CD14-positive monocyte (primary cell): ENCODE measurements at regions of chr10 and their contacts with region 1.

Region 1: GRCh38 chr10:132434405-132435005 is 37.5 kb downstream of the PWWP2B start:
- DNase-seq: peak; percentile 65 to 78 (median 69)
- H3K4me3 ChIP-seq: peak overlapping the region in 1 of 3 experiments; percentile 34
- H3K4me3 Mint-ChIP-seq: peak overlapping the region; percentile 31 to 39
- H3K27ac ChIP-seq: peak overlapping the region in 1 of 2 donors; percentile 76
- H3K27ac Mint-ChIP-seq: peak overlapping the region in 6 of 7 donors; percentile 22 to 79 (median 58)
- H3K4me1 ChIP-seq: peaks cover 12 to 13% of the 10 kb centered on the region in 2 donors
- H3K4me1 Mint-ChIP-seq: peaks cover 15% of the 10 kb centered on the region
- H3K27me3 ChIP-seq: no peaks in the 10 kb centered on the region
- H3K27me3 Mint-ChIP-seq: peaks cover 0 to 2% (median 2%) of the 10 kb centered on the region in 3 donors
- CTCF ChIP-seq: no peak

Region 2: GRCh38 chr10:132387764-132388210 is 46.7 kb before region 1 on chr10:
- intact Hi-C with region 1: loop called in 1 of 2 experiments (anchors 5 kb)
- DNase-seq: peak; percentile 61 to 71 (median 61)
- H3K4me3 ChIP-seq: peak overlapping the region in 2 of 3 experiments; percentile 25 to 65
- H3K4me3 Mint-ChIP-seq: peak overlapping the region; percentile 70 to 75
- H3K27ac ChIP-seq: peak overlapping the region; percentile 63 to 71
- H3K27ac Mint-ChIP-seq: peak overlapping the region; percentile 51 to 93 (median 84)
- H3K4me1 ChIP-seq: peaks cover 36 to 57% of the 10 kb centered on the region in 2 donors
- H3K4me1 Mint-ChIP-seq: peaks cover 46% of the 10 kb centered on the region
- H3K27me3 ChIP-seq: peaks cover 0 to 6% of the 10 kb centered on the region in 2 donors
- H3K27me3 Mint-ChIP-seq: peaks cover 3 to 21% (median 5%) of the 10 kb centered on the region in 3 donors
- CTCF ChIP-seq: peak; percentile 52